PC-3 (cell line): ENCODE measurements at regions of chr16 and their contacts with region 1.

Region 1: GRCh38 chr16:47141773-47142485 is 1.8 kb downstream of the NETO2 start:
- DNase-seq: peak; percentile 87
- ATAC-seq: peak; percentile 62
- H3K4me3 ChIP-seq: peak overlapping the region; percentile 69
- H3K27ac ChIP-seq: no peak overlapping the region
- H3K4me1 ChIP-seq: peaks cover 5% of the 10 kb centered on the region
- H3K27me3 ChIP-seq: no peaks in the 10 kb centered on the region
- CTCF ChIP-seq: peak; percentile 93

Region 2: GRCh38 chr16:46986896-46987295 is 155.0 kb before region 1 on chr16:
- CTCF ChIA-PET with region 1: no interaction called
- POLR2A ChIA-PET with region 1: no interaction called
- intact Hi-C with region 1: no loop called
- DNase-seq: no peak
- ATAC-seq: no peak
- H3K4me3 ChIP-seq: no peak overlapping the region
- H3K27ac ChIP-seq: no peak overlapping the region
- H3K4me1 ChIP-seq: no peaks in the 10 kb centered on the region
- H3K27me3 ChIP-seq: no peaks in the 10 kb centered on the region
- CTCF ChIP-seq: no peak

Region 3: GRCh38 chr16:47037746-47038458 is 104.0 kb before region 1 on chr16:
- CTCF ChIA-PET with region 1: interaction called, 9 read pairs
- POLR2A ChIA-PET with region 1: no interaction called
- intact Hi-C with region 1: loop called (anchors 5 kb)
- DNase-seq: peak; percentile 75
- ATAC-seq: peak; percentile 96
- H3K4me3 ChIP-seq: peak overlapping the region; percentile 73
- H3K27ac ChIP-seq: no peak overlapping the region
- H3K4me1 ChIP-seq: no peaks in the 10 kb centered on the region
- H3K27me3 ChIP-seq: no peaks in the 10 kb centered on the region
- CTCF ChIP-seq: peak; percentile 73

Region 4: DNA sequence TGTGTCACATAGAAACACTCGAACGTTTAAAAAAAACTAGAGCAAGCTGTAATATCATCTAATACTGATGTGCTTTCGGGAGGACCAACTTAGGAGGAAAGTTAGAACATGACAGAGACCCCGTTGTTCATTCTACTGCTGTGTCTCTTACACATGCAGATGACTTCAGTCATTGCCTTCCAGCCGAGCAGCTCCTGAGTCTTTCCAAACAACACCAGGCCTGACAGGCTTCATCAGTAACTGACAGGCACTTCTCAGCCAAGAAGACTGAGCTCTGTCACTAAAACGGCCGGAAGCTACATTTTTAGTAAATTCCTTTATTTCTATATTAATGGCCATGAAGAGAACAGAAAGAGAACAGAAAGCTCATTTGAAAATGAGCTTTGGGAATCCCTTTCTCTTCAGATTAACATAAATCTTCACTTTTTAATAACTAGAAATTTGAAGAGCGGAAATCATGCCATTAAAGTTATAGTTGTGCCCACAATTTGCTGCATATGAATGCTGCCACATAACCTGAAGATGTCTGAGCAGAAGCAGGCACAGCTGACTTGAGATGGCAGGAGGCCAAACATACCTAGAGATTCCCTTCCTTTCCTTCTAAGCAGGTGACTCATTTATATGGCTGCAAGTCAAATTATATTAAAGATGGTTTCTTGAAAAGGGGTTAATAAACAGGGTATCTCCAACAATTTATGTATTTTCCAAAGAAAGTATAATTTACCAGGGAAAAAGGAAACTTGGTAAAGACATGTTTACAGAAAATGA is 170.0 kb after region 1 on chr16:
- CTCF ChIA-PET with region 1: no interaction called
- POLR2A ChIA-PET with region 1: no interaction called
- intact Hi-C with region 1: no loop called
- DNase-seq: peak; percentile 61
- ATAC-seq: no peak
- H3K4me3 ChIP-seq: no peak overlapping the region
- H3K27ac ChIP-seq: no peak overlapping the region
- H3K4me1 ChIP-seq: no peaks in the 10 kb centered on the region
- H3K27me3 ChIP-seq: no peaks in the 10 kb centered on the region
- CTCF ChIP-seq: no peak

Region 5: DNA sequence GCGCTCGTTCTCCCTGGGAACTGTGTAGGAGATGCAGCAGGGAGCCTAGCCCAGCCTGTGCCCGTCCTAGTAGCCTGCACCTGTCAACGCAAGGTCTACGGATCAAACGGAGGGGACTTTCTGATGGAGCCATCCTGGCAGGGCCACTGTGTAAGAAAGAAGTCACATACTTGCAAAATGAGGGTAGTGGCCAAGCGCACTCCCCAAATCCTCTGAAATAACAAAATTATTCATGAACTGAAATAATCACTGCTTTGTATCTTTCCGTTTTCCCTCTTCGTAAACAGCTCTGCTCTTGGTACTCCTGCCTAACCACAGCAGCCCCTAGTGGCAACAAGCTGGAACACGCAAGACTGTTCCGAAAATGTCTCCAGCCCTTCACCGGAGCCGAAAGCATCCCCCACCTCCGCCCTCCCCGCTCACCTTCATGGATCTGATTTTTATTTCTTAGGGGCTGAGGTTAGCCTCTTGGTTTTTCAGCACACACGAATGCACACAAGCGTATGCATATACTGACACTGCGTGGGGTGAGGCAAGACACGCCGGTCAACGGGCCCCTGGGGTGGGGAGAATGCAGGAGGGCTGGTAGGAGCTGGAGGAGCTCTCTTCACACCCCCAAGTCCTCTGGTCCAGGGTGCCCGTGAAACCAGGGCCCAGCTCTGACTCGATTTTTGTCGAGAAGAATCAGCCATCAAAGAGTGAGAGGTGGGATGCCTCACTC is 913.1 kb after region 1 on chr16:
- CTCF ChIA-PET with region 1: no interaction called
- POLR2A ChIA-PET with region 1: no interaction called
- intact Hi-C with region 1: loop called (anchors 5 kb)
- DNase-seq: peak; percentile 67
- ATAC-seq: peak; percentile 96
- H3K4me3 ChIP-seq: peak overlapping the region; percentile 64
- H3K27ac ChIP-seq: no peak overlapping the region
- H3K4me1 ChIP-seq: peaks cover 11% of the 10 kb centered on the region
- H3K27me3 ChIP-seq: no peaks in the 10 kb centered on the region
- CTCF ChIP-seq: peak; percentile 84

Region 6: DNA sequence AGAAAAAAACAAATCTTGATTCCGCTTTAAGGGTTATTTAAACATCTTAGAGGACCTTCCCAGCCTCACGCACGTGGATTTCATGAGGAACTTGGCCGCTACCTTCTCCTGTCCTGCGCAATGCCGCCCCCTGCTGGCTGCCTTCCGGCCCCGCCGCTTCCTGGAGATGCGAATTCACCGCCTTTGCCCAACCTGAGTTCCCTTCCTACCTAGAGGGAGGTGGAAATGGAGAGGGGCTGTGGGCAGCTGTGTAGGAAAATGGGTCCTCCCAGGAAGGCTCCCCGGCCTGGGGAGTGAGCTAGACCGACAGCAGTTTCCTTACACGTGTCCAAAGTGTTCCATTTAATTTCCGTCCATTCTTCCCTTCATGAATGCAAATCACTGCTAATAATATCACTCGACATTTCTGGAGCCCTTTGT is 1014.9 kb after region 1 on chr16:
- CTCF ChIA-PET with region 1: no interaction called
- POLR2A ChIA-PET with region 1: no interaction called
- intact Hi-C with region 1: loop called (anchors 2 kb)
- DNase-seq: peak; percentile 80
- ATAC-seq: peak; percentile 70
- H3K4me3 ChIP-seq: no peak overlapping the region
- H3K27ac ChIP-seq: peak overlapping the region; percentile 74
- H3K4me1 ChIP-seq: peaks cover 25% of the 10 kb centered on the region
- H3K27me3 ChIP-seq: no peaks in the 10 kb centered on the region
- CTCF ChIP-seq: peak; percentile 80